ENCODE measurements at regions of chr3 and their contacts with region 1.

Region 1: DNA sequence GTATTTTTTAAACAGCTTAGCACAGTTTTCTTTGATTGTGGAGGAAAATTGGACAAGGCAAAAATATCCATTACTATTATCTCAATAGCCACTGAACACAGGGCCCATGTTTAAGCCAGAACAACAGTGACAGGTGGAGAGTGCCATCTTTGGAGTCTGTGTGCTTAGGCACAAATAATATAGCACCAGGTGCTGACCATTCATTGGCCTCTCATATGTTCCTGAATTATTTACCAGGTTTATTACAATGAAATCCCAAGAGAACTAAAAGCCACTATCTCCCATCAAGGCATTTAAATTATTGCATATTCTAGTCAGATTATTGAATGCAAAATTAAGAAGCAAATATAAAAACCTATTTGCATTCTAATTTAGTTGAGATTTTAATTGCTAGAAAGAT is 39.6 kb downstream of the GPR156 start:
- DNase-seq: no peak
- H3K4me3 ChIP-seq: no peak overlapping the region
- H3K27ac ChIP-seq: no peak overlapping the region
- H3K4me1 ChIP-seq: no peaks in the 10 kb centered on the region
- H3K27me3 ChIP-seq: peaks cover 10 to 21% of the 10 kb centered on the region in 2 experiments
- CTCF ChIP-seq: no peak
- POLR2A ChIP-seq: no peak

Region 2: DNA sequence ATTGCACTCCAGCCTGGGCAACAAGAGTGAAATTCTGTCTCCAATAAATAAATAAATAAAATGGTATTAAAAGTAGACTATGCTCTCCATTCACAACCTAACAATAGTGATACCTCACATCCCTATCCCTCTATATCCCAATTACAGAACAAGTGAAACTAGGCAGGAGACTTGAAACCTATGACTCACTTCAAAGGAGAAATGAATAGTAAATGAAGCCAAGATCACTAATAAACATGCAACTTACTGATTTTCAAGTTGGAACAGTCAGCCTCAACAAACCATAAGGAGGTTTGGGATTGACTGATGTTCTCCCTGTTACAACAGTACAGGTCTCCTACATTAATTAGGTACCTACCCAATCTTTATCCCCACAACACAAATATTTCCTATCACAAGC is 254.5 kb before region 1 on chr3:
- CTCF ChIA-PET with region 1: no interaction called
- POLR2A ChIA-PET with region 1: no interaction called
- dilution Hi-C with region 1: no loop called
- intact Hi-C with region 1: no loop called
- DNase-seq: peak; percentile 11
- H3K4me3 ChIP-seq: no peak overlapping the region
- H3K27ac ChIP-seq: no peak overlapping the region
- H3K4me1 ChIP-seq: no peaks in the 10 kb centered on the region
- H3K27me3 ChIP-seq: no peaks in the 10 kb centered on the region
- CTCF ChIP-seq: no peak
- POLR2A ChIP-seq: no peak

Region 3: DNA sequence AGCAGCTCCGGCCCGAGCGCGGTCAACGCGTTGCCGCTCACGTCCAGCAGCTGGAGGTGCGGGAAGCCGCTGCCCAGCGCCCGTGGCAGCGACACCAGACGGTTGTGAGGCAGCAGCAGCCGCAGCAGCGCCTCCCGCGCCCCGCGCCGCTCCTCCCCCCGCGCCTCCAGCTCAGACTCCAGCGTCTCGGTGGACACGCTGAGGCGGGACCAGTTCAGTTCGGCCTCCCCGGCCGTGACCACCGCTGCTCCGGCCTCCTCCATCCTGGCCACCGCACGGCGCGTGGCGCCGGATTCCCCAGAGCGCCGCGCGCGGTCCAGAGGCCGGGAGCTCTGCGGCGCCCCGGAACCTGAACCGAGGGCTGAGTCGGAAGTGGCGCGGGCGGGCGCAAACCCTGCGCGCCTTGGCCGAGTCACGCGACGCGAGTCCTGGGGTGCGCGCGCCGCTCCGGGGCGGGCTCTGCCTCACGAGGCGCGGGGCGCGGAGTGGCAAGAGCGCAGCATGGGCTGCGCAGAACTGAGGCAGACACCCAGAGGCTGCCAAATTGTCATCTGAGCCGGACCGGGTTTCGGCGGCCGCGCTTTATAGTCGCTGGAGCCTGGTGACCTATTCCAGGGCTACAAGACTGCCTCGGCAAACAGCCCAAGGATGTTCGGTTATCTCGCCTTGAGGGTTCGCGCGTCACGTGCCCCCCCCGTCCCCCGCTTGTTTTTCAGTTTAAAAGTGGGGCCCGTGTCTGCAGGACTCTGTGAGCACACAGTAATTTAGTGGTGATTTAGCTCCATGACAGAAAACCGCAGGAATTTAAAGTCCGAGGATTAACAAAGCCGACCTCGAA is 103.8 kb after region 1 on chr3 and contains the start of gene LRRC58:
- CTCF ChIA-PET with region 1: interaction called, 18 read pairs
- POLR2A ChIA-PET with region 1: no interaction called
- dilution Hi-C with region 1: no loop called
- intact Hi-C with region 1: loop called (anchors 1 kb)
- DNase-seq: peak; percentile 88
- H3K4me3 ChIP-seq: peak within 1 kb of the TSS; percentile 34 to 76 (median 59)
- H3K27ac ChIP-seq: peak within 1 kb of the TSS; percentile 67
- H3K4me1 ChIP-seq: peaks cover 14% of the 10 kb centered on the region
- H3K27me3 ChIP-seq: peaks cover 5% of the 10 kb centered on the region in 2 experiments
- CTCF ChIP-seq: peak; percentile 5 to 49
- POLR2A ChIP-seq: peak; percentile 81
- total RNA-seq, gene LRRC58: 11.9 and 12.3 TPM in 2 replicates